Activated CD4-positive, alpha-beta T cell treated with anti-CD3 and anti-CD28 coated beads, Interleukin-2, amount 10 ng/mL, durations not matched to agents 24 days and 14 days (primary cell): ENCODE measurements at regions of chr19 and their contacts with region 1.

Region 1: GRCh38 chr19:43668406-43669158 is 1.4 kb downstream of the PLAUR start:
- DNase-seq: peak; percentile 98
- H3K4me3 Mint-ChIP-seq: peak overlapping the region; percentile 91
- H3K27ac Mint-ChIP-seq: peak overlapping the region; percentile 86
- H3K4me1 Mint-ChIP-seq: peaks cover 40% of the 10 kb centered on the region
- H3K27me3 Mint-ChIP-seq: peaks cover 7% of the 10 kb centered on the region

Region 2: GRCh38 chr19:43532962-43533545 is 135.5 kb before region 1 on chr19 and contains the start of gene ZNF575:
- intact Hi-C with region 1: loop called (anchors 1 kb)
- DNase-seq: peak; percentile 95
- H3K4me3 Mint-ChIP-seq: peak within 1 kb of the TSS; percentile 83
- H3K27ac Mint-ChIP-seq: peak within 1 kb of the TSS; percentile 95
- H3K4me1 Mint-ChIP-seq: peaks cover 20% of the 10 kb centered on the region
- H3K27me3 Mint-ChIP-seq: no peaks in the 10 kb centered on the region
- total RNA-seq, gene ZNF575: 1.8 and 2.4 TPM in 2 replicates

Region 3: GRCh38 chr19:43624933-43625332 is 43.6 kb before region 1 on chr19:
- intact Hi-C with region 1: loop called (anchors 1 kb)
- DNase-seq: peak; percentile 95
- H3K4me3 Mint-ChIP-seq: peak overlapping the region; percentile 34
- H3K27ac Mint-ChIP-seq: no peak overlapping the region
- H3K4me1 Mint-ChIP-seq: peaks cover 24% of the 10 kb centered on the region
- H3K27me3 Mint-ChIP-seq: peaks cover 4% of the 10 kb centered on the region

Region 4: GRCh38 chr19:43754503-43755255 is 86.1 kb after region 1 on chr19 and contains the start of gene SMG9:
- intact Hi-C with region 1: loop called (anchors 1 kb)
- DNase-seq: peak; percentile 100
- H3K4me3 Mint-ChIP-seq: peak within 1 kb of the TSS; percentile 94
- H3K27ac Mint-ChIP-seq: peak within 1 kb of the TSS; percentile 100
- H3K4me1 Mint-ChIP-seq: peaks cover 68% of the 10 kb centered on the region
- H3K27me3 Mint-ChIP-seq: no peaks in the 10 kb centered on the region
- total RNA-seq, gene SMG9: 83.9 and 86.6 TPM in 2 replicates